H1 (cell line): ENCODE measurements at regions of chr19 and their contacts with region 1.

Region 1: DNA sequence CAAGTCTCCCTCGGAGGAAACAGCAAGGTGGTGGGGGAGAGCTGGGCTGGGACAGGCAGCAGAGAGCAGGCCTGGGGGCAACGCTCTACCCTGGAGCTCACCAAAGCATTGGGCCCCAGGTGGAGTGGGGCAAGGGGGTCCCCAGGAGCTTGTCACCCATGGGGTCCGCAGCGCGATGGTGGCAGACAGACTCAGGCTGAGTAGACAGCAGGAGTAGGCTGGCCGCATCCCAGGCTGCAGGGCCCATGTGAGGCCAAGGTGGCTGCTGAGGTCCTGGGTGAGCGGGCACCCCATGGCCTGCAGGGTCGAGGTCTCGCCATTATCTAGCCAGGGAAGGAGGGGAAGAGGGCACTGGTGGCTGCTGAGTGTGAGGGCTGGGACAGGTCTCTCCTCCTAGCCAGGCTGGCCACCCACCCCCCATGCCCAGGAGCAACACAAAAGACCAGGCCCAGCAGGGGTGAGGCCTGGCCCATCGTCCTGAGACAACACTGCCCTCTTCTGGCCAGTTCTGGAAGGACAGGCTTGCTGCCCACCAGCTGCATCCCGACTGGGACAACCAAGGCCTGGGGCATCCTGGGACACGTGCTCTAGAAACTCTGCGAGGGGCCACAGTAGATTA is 33.1 kb downstream of the CEBPG start:
- DNase-seq: peak; percentile 68 to 98
- H3K4me3 ChIP-seq: no peak overlapping the region
- H3K27ac ChIP-seq: 0 out of 2 replicates have a peak overlapping the region, but pooled peaks have one; percentile 1
- H3K4me1 ChIP-seq: peaks cover 0 to 6% (median 5%) of the 10 kb centered on the region in 4 experiments; a peak in 5 of 7 replicates
- H3K27me3 ChIP-seq: no peaks in the 10 kb centered on the region
- CTCF ChIP-seq: peak; percentile 93 to 99 (median 95)
- EP300 ChIP-seq: no peak
- POLR2A ChIP-seq: no peak
- RAD21 ChIP-seq: peak; percentile 90 to 95

Region 2: DNA sequence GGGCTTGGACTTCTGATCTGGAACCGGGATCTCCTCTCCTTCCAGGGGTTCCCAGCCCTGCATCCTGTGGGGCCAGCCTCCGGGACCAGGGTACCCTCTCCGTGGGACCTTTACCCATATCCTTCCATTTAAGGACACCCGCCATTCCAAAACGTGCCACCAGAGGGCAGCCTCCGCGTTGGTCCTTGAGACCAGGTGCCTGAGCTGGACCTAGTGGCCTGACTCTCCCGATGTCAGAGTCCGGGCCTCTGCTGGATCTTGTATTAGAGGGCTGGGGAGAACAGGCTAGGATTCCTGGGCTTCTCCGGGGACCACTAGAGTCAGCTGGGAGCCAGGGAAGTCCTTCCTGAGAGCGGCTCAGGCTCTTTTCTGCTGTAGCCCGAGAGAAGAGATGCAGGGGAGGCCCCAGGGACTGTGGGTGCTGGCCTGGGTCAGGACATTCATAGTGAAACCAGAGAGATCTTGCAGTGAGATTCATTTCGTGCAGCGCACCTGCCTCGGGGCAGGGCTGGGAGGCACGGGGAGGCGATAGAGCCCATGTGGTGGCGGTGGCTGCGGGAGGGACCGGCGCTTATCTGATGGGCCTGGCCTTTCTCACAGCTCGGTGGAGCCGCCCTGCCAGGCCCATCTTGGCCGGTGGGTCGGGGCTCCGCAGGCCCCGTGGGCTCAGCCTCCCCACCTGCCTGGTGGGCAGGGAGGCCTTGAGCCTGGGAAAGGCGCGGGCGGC is 171.2 kb before region 1 on chr19:
- CTCF ChIA-PET with region 1: interaction called, 426 read pairs
- POLR2A ChIA-PET with region 1: interaction called, 3 read pairs
- DNase-seq: peak; percentile 70 to 99
- H3K4me3 ChIP-seq: no peak overlapping the region
- H3K27ac ChIP-seq: no peak overlapping the region
- H3K4me1 ChIP-seq: no peaks in the 10 kb centered on the region; a peak in 1 of 7 replicates
- H3K27me3 ChIP-seq: no peaks in the 10 kb centered on the region
- CTCF ChIP-seq: peak; percentile 90 to 91 (median 91)
- EP300 ChIP-seq: no peak
- POLR2A ChIP-seq: no peak
- RAD21 ChIP-seq: peak; percentile 87 to 94

Region 3: DNA sequence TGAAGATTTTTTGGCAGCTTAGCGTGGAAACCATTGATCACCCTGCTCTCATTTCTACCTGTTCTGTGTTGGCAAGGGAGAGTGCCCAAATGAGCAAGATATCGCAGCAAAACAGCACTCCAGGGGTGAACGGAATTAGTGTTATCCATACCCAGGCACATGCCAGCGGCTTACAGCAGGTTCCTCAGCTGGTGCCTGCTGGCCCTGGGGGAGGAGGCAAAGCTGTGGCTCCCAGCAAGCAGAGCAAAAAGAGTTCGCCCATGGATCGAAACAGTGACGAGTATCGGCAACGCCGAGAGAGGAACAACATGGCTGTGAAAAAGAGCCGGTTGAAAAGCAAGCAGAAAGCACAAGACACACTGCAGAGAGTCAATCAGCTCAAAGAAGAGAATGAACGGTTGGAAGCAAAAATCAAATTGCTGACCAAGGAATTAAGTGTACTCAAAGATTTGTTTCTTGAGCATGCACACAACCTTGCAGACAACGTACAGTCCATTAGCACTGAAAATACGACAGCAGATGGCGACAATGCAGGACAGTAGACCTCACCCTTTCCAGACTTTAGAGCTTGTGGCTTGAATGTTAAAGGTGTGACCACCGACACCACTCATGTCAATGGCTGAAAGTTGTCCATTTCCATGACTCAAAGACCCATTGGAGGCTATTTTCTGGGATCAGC is 27.3 kb before region 1 on chr19:
- CTCF ChIA-PET with region 1: interaction called, 21 read pairs
- POLR2A ChIA-PET with region 1: interaction called, 6 read pairs
- DNase-seq: no peak
- H3K4me3 ChIP-seq: no peak overlapping the region
- H3K27ac ChIP-seq: 0 out of 2 replicates have a peak overlapping the region, but pooled peaks have one; percentile 21
- H3K4me1 ChIP-seq: peaks cover 4 to 12% (median 6%) of the 10 kb centered on the region in 4 experiments; a peak in 6 of 7 replicates
- H3K27me3 ChIP-seq: no peaks in the 10 kb centered on the region
- CTCF ChIP-seq: no peak
- EP300 ChIP-seq: no peak
- POLR2A ChIP-seq: no peak
- RAD21 ChIP-seq: no peak

Region 4: DNA sequence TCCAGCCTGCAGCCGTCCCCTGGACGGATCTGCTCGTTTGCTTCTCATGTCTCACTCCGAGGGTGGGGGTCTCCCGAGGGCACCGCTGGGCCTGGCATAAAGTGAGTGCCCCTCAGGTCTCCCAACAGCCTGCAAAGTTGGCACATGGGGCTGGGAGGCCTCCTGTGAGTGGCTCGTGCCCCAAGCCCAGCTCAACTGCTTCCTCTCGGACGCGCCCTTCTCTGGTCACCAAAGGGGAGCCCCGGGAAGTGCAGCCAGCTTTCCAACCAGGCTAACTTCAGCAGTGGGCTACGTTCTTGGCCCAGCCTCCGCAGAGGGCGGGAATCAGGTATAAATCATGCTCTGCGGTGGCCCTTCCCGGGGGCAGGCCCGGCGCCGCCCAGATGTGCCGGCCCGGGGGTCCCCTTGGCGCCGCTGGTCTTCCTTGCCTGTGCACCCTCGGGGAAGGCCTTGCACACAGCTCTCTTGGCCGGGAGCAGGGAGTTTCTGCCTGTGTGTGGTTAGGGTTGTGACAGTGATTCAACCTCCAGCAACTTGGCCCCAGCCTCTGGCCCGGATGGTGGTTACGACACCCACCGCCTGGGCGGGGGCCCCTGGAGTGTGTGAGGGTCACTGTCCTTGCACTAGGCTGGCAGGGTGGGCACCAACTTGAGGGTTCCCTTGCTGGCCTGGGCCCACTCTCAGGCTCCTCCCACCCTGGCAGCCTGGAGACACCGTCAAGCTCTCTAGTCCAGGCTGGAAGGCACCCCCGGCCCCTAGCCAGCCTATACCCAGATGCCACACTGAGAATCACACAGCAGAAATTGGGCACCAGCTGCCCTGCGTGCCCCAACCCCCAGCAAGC is 12.4 kb before region 1 on chr19:
- CTCF ChIA-PET with region 1: interaction called, 83 read pairs
- POLR2A ChIA-PET with region 1: interaction called, 3 read pairs
- DNase-seq: no peak
- H3K4me3 ChIP-seq: no peak overlapping the region
- H3K27ac ChIP-seq: no peak overlapping the region
- H3K4me1 ChIP-seq: peaks cover 0 to 14% (median 8%) of the 10 kb centered on the region in 4 experiments; a peak in 4 of 7 replicates
- H3K27me3 ChIP-seq: no peaks in the 10 kb centered on the region
- CTCF ChIP-seq: no peak
- EP300 ChIP-seq: no peak
- POLR2A ChIP-seq: no peak
- RAD21 ChIP-seq: no peak

Region 5: DNA sequence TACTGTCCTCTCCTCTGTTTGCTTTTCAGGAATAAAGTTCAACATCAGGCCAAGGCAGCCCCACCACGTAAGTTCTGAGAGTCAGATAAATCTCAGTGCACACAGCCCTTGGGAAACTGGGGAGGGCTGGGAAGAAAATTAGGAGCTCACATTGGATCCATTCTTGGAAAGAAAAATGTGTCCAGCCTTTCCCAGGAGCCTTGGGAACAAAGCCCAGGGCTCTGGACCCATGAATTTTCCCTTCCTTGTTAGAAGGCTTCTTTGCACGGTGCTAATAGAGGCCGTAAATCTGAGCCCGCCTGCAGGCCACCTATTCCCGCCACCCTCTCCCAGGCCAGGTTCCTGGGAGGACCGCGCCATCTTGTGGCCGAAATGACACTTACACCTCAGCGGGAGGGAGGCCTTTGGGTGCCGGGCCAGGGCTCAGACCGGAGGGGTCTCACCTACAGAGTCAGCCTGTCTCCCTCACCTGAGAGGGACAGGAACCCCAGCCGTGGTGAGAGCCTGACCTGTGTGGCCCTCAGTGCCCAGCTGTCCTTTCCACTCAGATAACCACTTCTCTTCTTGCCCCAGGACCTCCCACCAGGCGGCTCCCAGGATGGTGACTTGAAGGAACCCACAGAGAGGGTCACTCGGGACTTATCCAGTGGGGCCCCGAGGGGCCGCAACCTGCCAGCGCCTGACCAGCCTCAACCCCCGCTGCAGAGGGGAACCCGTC is 364.9 kb after region 1 on chr19:
- CTCF ChIA-PET with region 1: interaction called, 21 read pairs
- POLR2A ChIA-PET with region 1: no interaction called
- DNase-seq: peak; percentile 29 to 89
- H3K4me3 ChIP-seq: no peak overlapping the region
- H3K27ac ChIP-seq: no peak overlapping the region
- H3K4me1 ChIP-seq: no peaks in the 10 kb centered on the region
- H3K27me3 ChIP-seq: no peaks in the 10 kb centered on the region
- CTCF ChIP-seq: peak; percentile 88 to 95 (median 89)
- EP300 ChIP-seq: no peak
- POLR2A ChIP-seq: no peak
- RAD21 ChIP-seq: peak; percentile 98 to 99